Activated CD8-positive, alpha-beta T cell treated with anti-CD3 and anti-CD28 coated beads, Interleukin-2, amount 10 ng/mL, durations not matched to agents 7 days and 5 days (primary cell): ENCODE measurements at regions of chr13 and their contacts with region 1.

Region 1: GRCh38 chr13:20160847-20161274 is at the start of gene GJA3:
- DNase-seq: peak; percentile 65
- ATAC-seq: peak; percentile 73
- H3K4me3 Mint-ChIP-seq: peak within 1 kb of the TSS; percentile 78
- H3K27ac Mint-ChIP-seq: no peak within 1 kb of the TSS
- H3K4me1 Mint-ChIP-seq: peaks cover 24% of the 10 kb centered on the region
- H3K27me3 Mint-ChIP-seq: peaks cover 38% of the 10 kb centered on the region
- total RNA-seq, gene GJA3: 0.16 TPM in 1 of 2 experiments, not detected in the other

Region 2: DNA sequence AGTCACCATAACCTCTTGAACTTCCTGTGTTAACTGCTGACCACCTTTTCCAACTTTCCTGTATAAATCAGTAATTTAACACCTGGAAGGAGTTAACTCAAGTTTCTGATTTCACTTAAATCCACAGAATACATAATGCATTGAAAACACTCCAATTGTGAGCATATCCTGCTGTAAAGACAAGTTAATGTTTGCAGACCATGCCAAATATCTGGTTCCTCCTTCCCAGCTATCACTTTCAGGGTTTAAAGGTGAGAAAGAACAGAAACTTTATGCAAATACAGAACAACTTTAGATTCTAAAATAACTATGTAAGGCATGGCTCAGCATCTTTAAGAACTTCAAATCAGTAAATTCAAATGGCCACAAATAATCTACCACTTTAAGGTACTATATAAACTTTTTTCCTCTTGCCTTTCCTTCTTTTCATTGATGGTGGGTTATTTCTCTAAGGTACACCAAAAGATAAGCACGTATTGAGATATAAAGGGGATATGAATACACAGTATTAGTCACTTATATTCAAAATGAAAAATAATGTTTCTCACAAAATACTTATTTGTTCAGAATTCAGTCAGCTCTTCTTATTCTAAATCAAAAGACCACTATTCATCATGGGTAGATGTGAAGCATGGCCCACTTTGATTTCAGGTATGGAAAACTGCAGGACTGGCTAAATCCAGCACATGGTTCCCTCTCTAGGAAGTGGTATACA is 592.9 kb before region 1 on chr13:
- CTCF ChIA-PET with region 1: no interaction called
- POLR2A ChIA-PET with region 1: no interaction called
- DNase-seq: no peak
- ATAC-seq: no peak
- H3K4me3 Mint-ChIP-seq: no peak overlapping the region
- H3K27ac Mint-ChIP-seq: no peak overlapping the region
- H3K4me1 Mint-ChIP-seq: no peaks in the 10 kb centered on the region
- H3K27me3 Mint-ChIP-seq: peaks cover 3% of the 10 kb centered on the region

Region 3: GRCh38 chr13:19984430-19985218 is 176.2 kb before region 1 on chr13:
- CTCF ChIA-PET with region 1: interaction called, 13 read pairs
- POLR2A ChIA-PET with region 1: interaction called, 3 read pairs
- DNase-seq: peak; percentile 25
- ATAC-seq: no peak
- H3K4me3 Mint-ChIP-seq: no peak overlapping the region
- H3K27ac Mint-ChIP-seq: no peak overlapping the region
- H3K4me1 Mint-ChIP-seq: peaks cover 12% of the 10 kb centered on the region
- H3K27me3 Mint-ChIP-seq: no peaks in the 10 kb centered on the region

Region 4: GRCh38 chr13:20127577-20128466 is 33.0 kb before region 1 on chr13:
- CTCF ChIA-PET with region 1: interaction called, 11 read pairs
- POLR2A ChIA-PET with region 1: no interaction called
- DNase-seq: peak; percentile 53
- ATAC-seq: peak; percentile 71
- H3K4me3 Mint-ChIP-seq: peak overlapping the region; percentile 54
- H3K27ac Mint-ChIP-seq: no peak overlapping the region
- H3K4me1 Mint-ChIP-seq: peaks cover 4% of the 10 kb centered on the region
- H3K27me3 Mint-ChIP-seq: peaks cover 32% of the 10 kb centered on the region

Region 5: GRCh38 chr13:20320885-20321284 is 160.0 kb after region 1 on chr13:
- CTCF ChIA-PET with region 1: no interaction called
- POLR2A ChIA-PET with region 1: no interaction called
- DNase-seq: no peak
- ATAC-seq: no peak
- H3K4me3 Mint-ChIP-seq: no peak overlapping the region
- H3K27ac Mint-ChIP-seq: no peak overlapping the region
- H3K4me1 Mint-ChIP-seq: no peaks in the 10 kb centered on the region
- H3K27me3 Mint-ChIP-seq: peaks cover 14% of the 10 kb centered on the region